Activated CD4-positive, alpha-beta T cell treated with anti-CD3 and anti-CD28 coated beads, Interleukin-2, amount 10 ng/mL, durations not matched to agents 24 days and 14 days (primary cell): ENCODE measurements at regions of chr3 and their contacts with region 1.

Region 1: GRCh38 chr3:169764452-169765274 is at the start of gene TERC:
- DNase-seq: peak; percentile 96
- H3K4me3 Mint-ChIP-seq: peak within 1 kb of the TSS; percentile 96
- H3K27ac Mint-ChIP-seq: peak within 1 kb of the TSS; percentile 98
- H3K4me1 Mint-ChIP-seq: peaks cover 19% of the 10 kb centered on the region
- H3K27me3 Mint-ChIP-seq: no peaks in the 10 kb centered on the region
- total RNA-seq, gene TERC: 8.9 TPM in 1 of 2 replicates, not detected in the other

Region 2: GRCh38 chr3:169780742-169781141 is 16.1 kb after region 1 on chr3:
- intact Hi-C with region 1: no loop called
- DNase-seq: peak; percentile 71
- H3K4me3 Mint-ChIP-seq: peak overlapping the region; percentile 33
- H3K27ac Mint-ChIP-seq: peak overlapping the region; percentile 48
- H3K4me1 Mint-ChIP-seq: peaks cover 42% of the 10 kb centered on the region
- H3K27me3 Mint-ChIP-seq: no peaks in the 10 kb centered on the region

Region 3: GRCh38 chr3:169812332-169813235 is 47.9 kb after region 1 on chr3 and contains the starts of genes LRRC34 and LRRIQ4:
- intact Hi-C with region 1: loop called (anchors 2 kb)
- DNase-seq: peak; percentile 91
- H3K4me3 Mint-ChIP-seq: peak within 1 kb of the TSS; percentile 92
- H3K27ac Mint-ChIP-seq: peak within 1 kb of the TSS; percentile 91
- H3K4me1 Mint-ChIP-seq: peaks cover 40% of the 10 kb centered on the region
- H3K27me3 Mint-ChIP-seq: peaks cover 14% of the 10 kb centered on the region
- total RNA-seq, gene LRRC34: 4.7 and 5.8 TPM in 2 replicates
- total RNA-seq, gene LRRIQ4: 0.09 and 0.21 TPM in 2 replicates

Region 4: DNA sequence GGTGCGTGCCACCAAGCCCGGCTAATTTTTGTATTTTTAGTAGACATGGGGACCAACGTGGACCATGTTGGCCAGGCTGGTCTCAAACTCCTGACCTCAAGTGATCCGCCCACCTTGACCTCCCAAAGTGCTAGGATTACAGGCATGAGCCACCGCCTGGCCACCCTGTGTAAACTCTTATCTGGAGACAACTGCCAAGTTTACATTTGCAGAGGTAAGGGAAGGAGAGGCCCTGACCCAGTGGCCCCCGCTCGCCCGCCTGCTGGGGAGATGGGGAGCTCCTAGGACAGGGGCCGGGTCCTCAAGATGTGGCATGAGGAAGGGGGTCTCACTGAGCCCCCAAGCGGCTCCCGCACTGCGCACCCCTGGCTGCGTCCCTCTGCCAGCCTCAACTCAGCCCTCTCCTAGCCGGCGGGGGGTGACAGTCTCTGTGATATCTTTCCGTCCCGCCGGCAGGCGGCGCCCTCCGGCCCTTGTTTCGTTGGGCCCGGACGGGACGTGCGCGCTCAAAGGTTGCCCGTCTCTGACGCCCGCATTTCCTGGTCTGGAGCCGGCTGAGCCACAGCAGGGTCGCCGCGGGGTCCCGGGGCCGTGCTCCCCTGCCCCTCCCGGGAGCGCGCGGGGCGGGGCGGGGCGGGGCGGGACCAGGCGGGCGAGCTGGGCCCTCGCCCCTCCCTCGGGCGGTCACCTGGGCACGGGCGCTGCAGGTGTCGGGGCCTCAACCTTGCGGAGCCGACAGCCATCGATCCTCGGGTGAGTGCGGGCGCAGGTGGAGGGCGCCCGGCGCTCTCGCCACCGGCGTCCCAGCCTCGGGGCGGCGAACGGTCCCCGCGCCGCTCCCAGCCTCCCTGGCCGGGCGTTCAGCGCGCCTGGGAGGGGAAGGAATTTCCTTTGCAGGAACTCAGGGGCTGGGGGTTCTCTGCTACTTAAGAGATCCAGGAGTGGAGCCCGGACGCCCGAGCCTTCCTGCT is 273.1 kb after region 1 on chr3 and contains the start of gene GPR160:
- intact Hi-C with region 1: loop called (anchors 5 kb)
- DNase-seq: peak; percentile 95
- H3K4me3 Mint-ChIP-seq: peak within 1 kb of the TSS; percentile 87
- H3K27ac Mint-ChIP-seq: no peak within 1 kb of the TSS
- H3K4me1 Mint-ChIP-seq: peaks cover 16% of the 10 kb centered on the region
- H3K27me3 Mint-ChIP-seq: peaks cover 6% of the 10 kb centered on the region
- total RNA-seq, gene GPR160: 3.4 and 3.6 TPM in 2 replicates

Region 5: GRCh38 chr3:170221924-170222646 is 457.4 kb after region 1 on chr3 and contains the start of gene PRKCI:
- intact Hi-C with region 1: loop called (anchors 2 kb)
- DNase-seq: peak; percentile 96
- H3K4me3 Mint-ChIP-seq: peak within 1 kb of the TSS; percentile 89
- H3K27ac Mint-ChIP-seq: peak within 1 kb of the TSS; percentile 94
- H3K4me1 Mint-ChIP-seq: peaks cover 23% of the 10 kb centered on the region
- H3K27me3 Mint-ChIP-seq: peaks cover 4% of the 10 kb centered on the region
- total RNA-seq, gene PRKCI: 19.7 and 32.3 TPM in 2 replicates

Region 6: DNA sequence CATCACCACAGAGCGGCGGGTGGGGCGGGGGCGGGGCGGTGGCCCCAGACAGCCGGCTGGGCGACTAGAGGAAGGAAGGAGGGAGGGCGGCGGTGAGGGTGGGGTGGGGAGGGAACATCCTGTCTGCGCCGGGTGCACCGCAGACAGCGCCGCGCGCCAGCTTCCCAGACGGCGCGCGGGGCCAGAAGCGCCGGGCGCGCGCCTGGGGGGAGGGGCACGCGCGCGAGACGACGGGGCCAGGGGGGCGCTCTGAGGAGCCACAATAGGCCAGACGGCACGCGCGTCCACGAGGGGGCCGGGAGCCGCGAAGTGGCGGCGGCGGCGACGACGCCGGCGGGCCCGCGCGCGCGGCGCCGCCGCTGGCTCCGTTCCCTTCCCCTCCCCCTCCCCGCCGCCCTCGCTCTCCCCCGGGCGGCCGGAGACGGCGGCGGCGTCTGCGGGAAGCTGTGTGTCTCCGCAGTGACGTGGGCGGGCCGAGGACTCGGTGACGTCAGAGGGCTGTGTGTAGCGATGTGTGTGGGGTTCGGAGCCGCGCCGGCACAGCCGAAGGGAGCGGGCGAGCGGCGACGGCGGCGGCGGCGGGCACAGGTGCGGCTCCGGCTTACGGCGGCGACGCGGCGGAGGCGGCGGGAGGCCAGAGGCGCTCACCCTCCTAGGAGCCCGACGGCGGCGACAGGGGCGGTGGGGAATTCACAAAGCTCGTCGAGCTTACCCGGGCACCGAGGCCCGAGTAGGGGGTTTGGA is 592.7 kb after region 1 on chr3 and contains the start of gene SKIL:
- intact Hi-C with region 1: loop called (anchors 2 kb)
- DNase-seq: peak; percentile 98
- H3K4me3 Mint-ChIP-seq: peak within 1 kb of the TSS; percentile 79
- H3K27ac Mint-ChIP-seq: peak within 1 kb of the TSS; percentile 95
- H3K4me1 Mint-ChIP-seq: peaks cover 27% of the 10 kb centered on the region
- H3K27me3 Mint-ChIP-seq: peaks cover 7% of the 10 kb centered on the region
- total RNA-seq, gene SKIL: 23.3 TPM in 2 replicates